ENCODE measurements at regions of chr4 and their contacts with region 1.

Region 1: DNA sequence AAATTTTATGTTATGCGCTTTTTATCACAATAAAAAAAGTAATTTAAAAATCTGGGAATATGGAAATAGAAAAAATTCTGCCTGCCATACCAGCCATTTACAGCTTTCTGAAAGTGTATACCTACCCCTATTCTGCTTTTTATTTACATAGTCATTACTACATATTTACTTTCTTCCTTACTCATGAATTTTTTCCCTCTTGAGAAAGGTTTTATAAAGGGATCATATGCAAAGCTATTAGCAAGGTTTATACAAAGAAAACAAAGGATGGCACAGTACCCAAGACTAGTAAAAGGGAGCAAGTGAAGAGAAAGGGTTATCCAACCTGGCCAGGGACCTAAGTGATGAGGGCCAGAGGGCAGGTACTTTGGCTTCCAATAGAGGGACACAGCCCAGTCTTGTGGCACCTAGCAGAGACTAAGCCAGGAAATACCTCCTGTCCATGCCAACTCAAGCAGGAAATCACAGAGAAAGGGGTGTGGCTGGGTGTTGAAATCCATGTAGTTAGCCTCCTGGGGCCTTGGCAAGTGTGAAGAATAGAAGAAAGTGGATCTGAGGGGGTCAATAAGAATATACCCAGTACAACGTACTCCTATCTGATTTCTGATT is 207.3 kb upstream of the VEGFC start:
- DNase-seq: peak; percentile 15 to 46
- H3K4me3 ChIP-seq: no peak overlapping the region
- H3K27ac ChIP-seq: no peak overlapping the region
- H3K4me1 ChIP-seq: peaks cover 25% of the 10 kb centered on the region
- H3K27me3 ChIP-seq: no peaks in the 10 kb centered on the region
- CTCF ChIP-seq: no peak

Region 2: GRCh38 chr4:177131736-177132135 is 131.7 kb after region 1 on chr4:
- CTCF ChIA-PET with region 1: no interaction called
- POLR2A ChIA-PET with region 1: no interaction called
- intact Hi-C with region 1: no loop called
- DNase-seq: no peak
- H3K4me3 ChIP-seq: no peak overlapping the region
- H3K27ac ChIP-seq: no peak overlapping the region
- H3K4me1 ChIP-seq: peaks cover 16% of the 10 kb centered on the region
- H3K27me3 ChIP-seq: no peaks in the 10 kb centered on the region
- CTCF ChIP-seq: no peak

Region 3: GRCh38 chr4:177532358-177532757 is 532.3 kb after region 1 on chr4:
- CTCF ChIA-PET with region 1: no interaction called
- POLR2A ChIA-PET with region 1: no interaction called
- intact Hi-C with region 1: loop called (anchors 5 kb)
- DNase-seq: no peak
- H3K4me3 ChIP-seq: no peak overlapping the region
- H3K27ac ChIP-seq: no peak overlapping the region
- H3K4me1 ChIP-seq: no peaks in the 10 kb centered on the region
- H3K27me3 ChIP-seq: no peaks in the 10 kb centered on the region
- CTCF ChIP-seq: no peak

Region 4: DNA sequence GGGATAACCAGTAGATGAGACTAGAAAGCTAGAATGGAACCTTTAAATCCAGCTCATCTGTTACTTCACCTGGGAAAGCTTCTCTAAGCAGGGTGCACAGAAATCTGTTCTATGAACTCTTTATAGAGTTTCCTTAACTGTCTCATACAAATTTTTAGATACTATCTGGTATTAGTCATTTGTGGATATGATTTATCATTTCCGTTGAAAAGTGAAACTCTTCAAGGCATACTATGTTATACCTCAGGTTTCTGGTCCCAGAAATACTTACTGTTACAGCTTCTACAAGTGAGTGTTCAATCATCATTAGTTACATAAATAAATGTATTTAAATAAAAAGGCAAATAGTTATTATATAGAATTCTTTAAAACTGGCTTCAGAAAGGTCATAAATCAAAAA is 740.5 kb after region 1 on chr4:
- CTCF ChIA-PET with region 1: no interaction called
- POLR2A ChIA-PET with region 1: interaction called, 19 read pairs
- intact Hi-C with region 1: no loop called
- DNase-seq: no peak
- H3K4me3 ChIP-seq: no peak overlapping the region
- H3K27ac ChIP-seq: no peak overlapping the region
- H3K4me1 ChIP-seq: 0 out of 2 replicates have a peak, but pooled peaks cover 4% of the 10 kb centered on the region
- H3K27me3 ChIP-seq: no peaks in the 10 kb centered on the region
- CTCF ChIP-seq: no peak

Measured in PC-9 (cell line).